Transverse colon (tissue), 4 donors: ENCODE measurements at regions of chr9 and their contacts with region 1.

Region 1: DNA sequence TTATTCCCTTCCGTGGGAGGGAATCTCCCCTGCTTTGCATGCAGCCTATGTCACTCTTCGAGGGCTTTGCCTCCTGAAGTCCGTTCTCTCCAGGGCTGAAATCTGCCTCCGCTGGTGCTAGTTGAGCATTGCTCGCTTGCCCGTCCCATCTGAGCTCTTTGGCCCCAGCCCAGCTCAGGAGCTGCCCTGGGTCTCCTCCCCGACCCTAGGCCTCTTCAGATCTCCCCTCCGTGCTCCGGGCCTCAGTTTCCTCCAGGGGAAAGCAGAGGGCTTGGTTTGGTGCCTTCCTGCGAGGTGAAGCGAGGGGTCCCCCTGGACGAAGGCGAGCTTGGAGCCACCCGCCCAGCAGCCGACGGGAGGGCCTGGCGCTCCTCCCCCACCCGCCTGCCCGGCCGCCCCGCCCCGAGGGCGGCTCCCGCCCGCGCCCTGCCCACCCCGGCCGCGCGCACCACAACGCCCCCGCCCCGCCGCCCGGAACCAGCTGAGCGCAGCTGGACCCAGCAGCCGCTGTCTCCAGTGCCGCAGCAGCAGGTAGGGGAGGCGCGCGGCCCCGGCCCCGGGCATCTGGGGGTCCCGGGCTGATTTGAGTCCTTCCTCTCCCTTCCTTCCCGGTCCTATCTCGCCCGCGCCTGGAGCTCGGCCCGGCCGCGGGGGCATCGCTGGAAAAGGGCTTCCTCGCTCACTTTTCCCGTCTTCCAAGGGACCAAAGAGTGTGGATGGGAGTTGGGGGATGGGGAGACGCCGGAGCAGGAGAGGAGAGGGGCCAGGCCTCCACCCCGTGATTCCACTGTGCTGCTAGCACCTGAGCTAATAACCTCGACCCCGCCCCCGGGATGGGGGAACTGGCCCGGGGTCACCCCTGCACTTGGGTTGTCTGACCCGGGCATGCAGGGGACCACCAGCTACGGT is at the start of gene GSN:
- DNase-seq: peak; percentile 90
- H3K4me3 ChIP-seq: peak within 1 kb of the TSS; percentile 75 to 93 (median 85)
- H3K27ac ChIP-seq: peak within 1 kb of the TSS; percentile 92 to 98 (median 95)
- H3K4me1 ChIP-seq: peaks cover 26 to 60% (median 46%) of the 10 kb centered on the region in 4 donors
- H3K27me3 ChIP-seq: no peaks in the 10 kb centered on the region
- CTCF ChIP-seq: peak in 2 of 5 experiments; percentile 8 to 21
- EP300 ChIP-seq: peak; percentile 32
- POLR2A ChIP-seq: peak; percentile 92
- total RNA-seq, gene GSN: 628 to 986 (median 782) TPM

Region 2: DNA sequence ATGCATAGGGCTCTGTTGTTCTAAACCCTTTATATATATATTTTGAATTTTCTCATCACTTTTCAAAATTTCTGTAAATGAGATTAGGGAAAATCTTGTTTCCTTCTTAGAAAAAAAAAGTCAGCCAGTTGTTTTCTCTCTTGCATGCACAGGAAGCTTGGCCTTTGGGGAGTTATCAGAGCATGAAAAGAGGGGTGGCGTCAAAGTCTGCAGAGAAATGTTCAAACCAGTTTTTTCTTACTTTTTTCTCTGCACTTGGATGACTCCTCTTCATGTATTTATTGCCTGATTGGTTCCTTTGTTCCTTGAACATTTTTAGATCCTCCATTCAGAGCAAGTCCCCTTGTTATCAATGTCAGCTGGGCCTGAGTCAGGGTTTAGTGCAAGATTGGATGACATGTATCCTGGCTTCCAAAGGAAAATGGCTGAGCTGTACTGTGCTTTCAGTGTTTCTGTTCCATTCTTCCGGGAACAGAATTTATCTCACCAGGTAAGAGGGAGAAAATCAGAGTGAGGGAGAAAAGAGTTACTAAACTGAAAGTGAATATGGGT is 1506.1 kb before region 1 on chr9:
- in situ Hi-C with region 1: no loop called
- intact Hi-C with region 1: no loop called
- DNase-seq: no peak
- H3K4me3 ChIP-seq: no peak overlapping the region
- H3K27ac ChIP-seq: no peak overlapping the region
- H3K4me1 ChIP-seq: no peaks in the 10 kb centered on the region
- H3K27me3 ChIP-seq: no peaks in the 10 kb centered on the region
- CTCF ChIP-seq: no peak
- EP300 ChIP-seq: no peak
- POLR2A ChIP-seq: no peak

Region 3: GRCh38 chr9:121286973-121287741 is 19.2 kb after region 1 on chr9:
- in situ Hi-C with region 1: no loop called
- intact Hi-C with region 1: loop called (anchors 2 kb)
- DNase-seq: peak; percentile 87
- H3K4me3 ChIP-seq: peak overlapping the region in 1 of 4 donors; percentile 23
- H3K27ac ChIP-seq: peak overlapping the region; percentile 95 to 98 (median 96)
- H3K4me1 ChIP-seq: peaks cover 78 to 88% (median 82%) of the 10 kb centered on the region in 4 donors
- H3K27me3 ChIP-seq: no peaks in the 10 kb centered on the region
- CTCF ChIP-seq: peak in 3 of 5 experiments; percentile 6 to 22 (median 19)
- EP300 ChIP-seq: peak; percentile 46
- POLR2A ChIP-seq: peak; percentile 49

Region 4: DNA sequence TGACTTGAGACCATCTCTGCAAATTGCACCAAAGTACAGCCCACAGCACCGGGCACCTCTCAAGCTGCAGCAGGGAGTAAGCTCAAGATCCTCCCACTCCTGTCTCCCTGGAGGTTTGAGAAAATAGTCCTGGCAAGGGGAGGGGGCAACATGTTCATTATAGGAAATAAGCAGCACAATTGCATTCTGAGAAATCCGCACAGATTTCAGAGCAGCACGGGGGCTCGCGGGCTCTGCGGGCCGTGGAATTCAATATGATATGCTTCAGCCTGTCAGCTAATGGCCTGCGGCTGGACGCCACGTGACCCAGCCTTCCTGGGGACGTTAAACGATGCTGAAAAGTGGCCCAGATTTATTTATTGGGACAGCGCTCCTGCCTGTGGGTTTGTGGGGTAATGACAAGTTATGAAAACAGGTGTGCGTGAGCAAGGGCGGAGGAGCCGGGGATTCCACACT is 539.9 kb after region 1 on chr9:
- in situ Hi-C with region 1: no loop called
- intact Hi-C with region 1: no loop called
- DNase-seq: no peak
- H3K4me3 ChIP-seq: no peak overlapping the region
- H3K27ac ChIP-seq: no peak overlapping the region
- H3K4me1 ChIP-seq: no peaks in the 10 kb centered on the region
- H3K27me3 ChIP-seq: no peaks in the 10 kb centered on the region
- CTCF ChIP-seq: no peak
- EP300 ChIP-seq: no peak
- POLR2A ChIP-seq: no peak